Right lobe of liver (tissue), 6 donors: ENCODE measurements at regions of chr3 and their contacts with region 1.

Region 1: DNA sequence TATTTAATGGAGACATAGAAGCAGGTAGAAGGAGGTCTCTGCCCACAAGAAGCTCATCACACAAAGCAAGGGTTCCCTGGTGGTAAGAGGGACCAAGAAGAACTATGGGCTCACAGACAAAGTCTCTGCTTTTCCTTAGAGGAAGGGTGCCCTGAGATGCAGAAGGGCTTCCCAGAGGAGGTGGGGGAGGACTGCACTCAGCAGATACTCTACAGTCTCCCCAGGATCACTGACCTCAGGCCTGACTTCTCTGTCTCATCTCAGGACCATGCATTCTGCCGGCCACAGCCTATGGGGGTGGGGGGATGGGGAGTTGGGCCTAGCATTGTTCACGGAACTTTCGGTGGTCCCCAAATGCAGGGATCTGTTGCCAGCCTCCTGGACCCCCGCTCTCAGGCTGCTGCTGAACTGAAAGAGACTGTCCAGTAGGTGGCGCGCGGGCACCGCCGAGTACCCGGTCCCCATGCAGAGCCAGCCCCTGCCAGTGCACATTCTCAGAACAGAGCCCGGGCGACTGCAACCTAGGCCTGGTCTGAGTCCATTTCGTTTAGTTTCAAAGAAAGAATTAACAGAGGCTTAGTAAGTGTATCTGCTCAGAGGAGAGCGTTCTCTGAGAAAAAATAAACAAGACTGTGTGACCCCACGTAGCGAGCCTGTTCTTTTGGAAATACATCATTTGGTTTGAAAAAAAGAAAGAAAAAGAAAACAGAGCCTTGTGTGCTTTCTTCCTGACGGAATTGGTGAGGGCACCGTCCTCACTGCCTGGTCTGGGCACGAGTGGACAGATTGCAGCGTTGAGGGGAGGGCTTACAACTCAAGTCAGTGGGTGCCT is 74.1 kb downstream of the LRTM1 start:
- DNase-seq: peak; percentile 76 to 79 (median 78)
- ATAC-seq: peak; percentile 87 to 94 (median 91)
- H3K4me3 ChIP-seq: no peak overlapping the region
- H3K27ac ChIP-seq: no peak overlapping the region
- H3K4me1 ChIP-seq: no peaks in the 10 kb centered on the region
- H3K27me3 ChIP-seq: no peaks in the 10 kb centered on the region
- CTCF ChIP-seq: peak; percentile 75 to 89 (median 86)
- POLR2A ChIP-seq: no peak

Region 2: DNA sequence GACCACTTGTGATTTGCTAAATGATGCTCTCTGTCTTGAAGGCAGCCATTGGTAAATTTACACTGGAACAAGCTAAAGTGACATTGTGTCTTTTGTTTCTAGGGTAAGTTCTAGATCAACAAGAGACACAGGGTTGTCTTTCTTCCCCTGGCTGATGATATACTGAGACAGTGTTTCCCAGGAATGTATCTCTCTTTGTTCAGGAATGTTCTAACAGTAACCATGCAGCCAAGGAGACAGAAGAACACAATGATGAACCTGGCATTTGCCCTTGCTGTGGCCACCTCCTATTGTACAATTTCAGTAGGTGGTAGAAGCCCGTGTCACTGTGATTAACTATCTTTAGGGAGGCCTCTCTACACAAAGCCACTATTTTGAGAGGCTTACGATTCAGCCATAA is 56.7 kb before region 1 on chr3:
- intact Hi-C with region 1: no loop called
- DNase-seq: no peak
- ATAC-seq: no peak
- H3K4me3 ChIP-seq: no peak overlapping the region
- H3K27ac ChIP-seq: no peak overlapping the region
- H3K4me1 ChIP-seq: no peaks in the 10 kb centered on the region
- H3K27me3 ChIP-seq: no peaks in the 10 kb centered on the region
- CTCF ChIP-seq: no peak
- POLR2A ChIP-seq: no peak

Region 3: DNA sequence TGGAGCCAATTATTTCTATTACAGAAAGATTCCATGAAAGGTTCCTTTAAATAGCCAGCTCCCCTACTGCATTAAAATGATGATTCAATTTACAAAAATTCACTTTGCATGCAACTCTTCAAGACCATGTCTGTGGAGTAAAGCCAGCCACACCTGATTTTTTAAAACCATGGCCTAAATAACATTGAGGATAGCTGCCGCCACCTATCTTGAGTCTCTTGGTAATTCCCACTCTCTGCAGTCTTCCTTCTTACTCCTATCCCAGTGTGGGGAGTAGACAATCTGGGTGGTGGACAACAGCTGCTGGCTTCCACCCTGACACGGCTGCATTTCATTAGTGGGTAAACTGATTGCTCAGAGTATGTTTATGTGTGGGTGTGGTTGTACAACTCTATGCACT is 63.4 kb after region 1 on chr3:
- intact Hi-C with region 1: no loop called
- DNase-seq: no peak
- ATAC-seq: no peak
- H3K4me3 ChIP-seq: no peak overlapping the region
- H3K27ac ChIP-seq: no peak overlapping the region
- H3K4me1 ChIP-seq: no peaks in the 10 kb centered on the region
- H3K27me3 ChIP-seq: no peaks in the 10 kb centered on the region
- CTCF ChIP-seq: no peak
- POLR2A ChIP-seq: no peak

Region 4: GRCh38 chr3:55169608-55170010 is 315.8 kb after region 1 on chr3:
- intact Hi-C with region 1: loop called (anchors 10 kb)
- DNase-seq: no peak
- ATAC-seq: no peak
- H3K4me3 ChIP-seq: no peak overlapping the region
- H3K27ac ChIP-seq: no peak overlapping the region
- H3K4me1 ChIP-seq: no peaks in the 10 kb centered on the region
- H3K27me3 ChIP-seq: no peaks in the 10 kb centered on the region
- CTCF ChIP-seq: no peak
- POLR2A ChIP-seq: no peak

Region 5: DNA sequence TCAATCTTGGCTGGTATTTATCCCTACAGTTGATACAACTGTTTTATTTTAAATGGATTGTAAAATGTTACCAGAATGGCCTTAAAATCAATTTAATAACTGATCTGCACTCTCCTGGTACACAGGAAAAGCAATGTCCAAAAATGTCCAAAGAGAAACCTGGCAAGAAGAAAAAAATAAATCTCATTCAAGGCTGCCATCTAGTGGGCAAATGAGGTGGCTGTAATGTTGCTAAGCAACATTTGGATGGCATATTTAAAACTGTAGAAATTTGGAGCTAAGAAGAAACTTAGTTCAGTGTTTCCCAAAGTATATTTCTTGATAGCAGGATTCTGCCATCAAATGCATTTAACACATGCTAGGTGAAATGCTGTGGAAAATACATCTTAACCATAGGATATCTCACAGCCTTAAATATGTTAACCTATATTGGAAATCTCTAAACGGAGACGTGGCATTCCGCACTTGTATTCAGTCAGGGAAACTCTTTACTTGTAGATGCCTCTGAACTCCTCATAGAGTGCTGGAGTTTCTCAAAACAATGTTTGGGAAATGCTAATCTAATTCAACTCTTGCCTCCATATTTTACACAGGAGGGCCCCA is 1397.7 kb after region 1 on chr3:
- intact Hi-C with region 1: loop called (anchors 10 kb)
- DNase-seq: no peak
- ATAC-seq: peak; percentile 75 to 82 (median 78)
- H3K4me3 ChIP-seq: no peak overlapping the region
- H3K27ac ChIP-seq: no peak overlapping the region
- H3K4me1 ChIP-seq: no peaks in the 10 kb centered on the region
- H3K27me3 ChIP-seq: no peaks in the 10 kb centered on the region
- CTCF ChIP-seq: peak; percentile 82 to 88 (median 84)
- POLR2A ChIP-seq: no peak